ENCODE measurements at regions of chr1 and their contacts with region 1.

Region 1: DNA sequence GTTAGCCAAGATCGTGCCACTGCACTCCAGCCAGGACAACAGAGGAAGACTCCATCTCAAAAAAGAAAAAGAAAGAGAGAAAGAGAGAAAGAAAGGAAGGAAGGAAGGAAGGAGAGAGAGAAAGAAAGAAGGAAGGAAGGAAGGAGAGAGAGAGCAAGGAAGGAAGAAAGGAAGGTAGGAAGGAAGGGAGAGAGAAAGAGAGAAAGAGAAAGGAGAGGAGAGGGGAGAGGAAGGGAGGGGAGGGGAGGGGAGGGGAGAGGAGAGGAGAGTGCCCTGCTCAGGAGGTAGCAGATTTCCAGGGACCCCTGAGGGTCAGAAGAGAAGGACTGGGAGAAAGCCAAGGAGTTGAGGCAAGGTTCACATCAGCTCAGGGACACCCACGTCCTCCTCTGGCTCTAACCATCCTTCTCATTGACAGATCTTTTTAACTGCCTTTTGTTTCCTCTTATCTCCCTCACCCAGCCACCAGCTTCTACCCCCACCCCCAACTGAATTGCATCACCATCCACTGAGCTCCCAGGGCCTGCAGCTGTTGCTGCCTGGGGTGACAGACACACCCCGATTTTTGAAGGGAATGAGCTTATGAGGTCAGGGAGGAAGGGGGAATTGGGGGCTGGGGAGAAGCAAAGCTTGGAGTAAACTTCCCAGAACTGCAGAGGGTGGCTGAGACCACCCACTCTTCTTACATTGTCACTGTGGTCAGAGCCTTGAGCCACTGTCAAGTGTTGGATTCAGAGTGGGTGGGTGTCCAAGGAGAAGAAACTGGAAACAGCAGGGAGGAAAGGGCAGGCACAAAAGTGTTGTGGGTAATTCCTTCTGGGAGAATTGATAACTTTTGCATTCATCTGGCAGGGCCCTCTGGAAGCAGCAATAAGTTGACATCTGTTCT is 91.6 kb downstream of the GLUL start:
- DNase-seq: peak; percentile 52
- H3K4me3 ChIP-seq: no peak overlapping the region
- H3K27ac ChIP-seq: peak overlapping the region in 1 of 2 donors; percentile 3
- H3K4me1 ChIP-seq: peaks cover 50% of the 10 kb centered on the region
- H3K27me3 ChIP-seq: no peaks in the 10 kb centered on the region
- CTCF ChIP-seq: no peak
- POLR2A ChIP-seq: no peak

Region 2: GRCh38 chr1:182080955-182081582 is 218.9 kb before region 1 on chr1:
- intact Hi-C with region 1: no loop called
- DNase-seq: peak; percentile 61
- H3K4me3 ChIP-seq: no peak overlapping the region
- H3K27ac ChIP-seq: no peak overlapping the region
- H3K4me1 ChIP-seq: peaks cover 16% of the 10 kb centered on the region
- H3K27me3 ChIP-seq: no peaks in the 10 kb centered on the region
- CTCF ChIP-seq: peak; percentile 28 to 75 (median 68)
- POLR2A ChIP-seq: no peak

Region 3: DNA sequence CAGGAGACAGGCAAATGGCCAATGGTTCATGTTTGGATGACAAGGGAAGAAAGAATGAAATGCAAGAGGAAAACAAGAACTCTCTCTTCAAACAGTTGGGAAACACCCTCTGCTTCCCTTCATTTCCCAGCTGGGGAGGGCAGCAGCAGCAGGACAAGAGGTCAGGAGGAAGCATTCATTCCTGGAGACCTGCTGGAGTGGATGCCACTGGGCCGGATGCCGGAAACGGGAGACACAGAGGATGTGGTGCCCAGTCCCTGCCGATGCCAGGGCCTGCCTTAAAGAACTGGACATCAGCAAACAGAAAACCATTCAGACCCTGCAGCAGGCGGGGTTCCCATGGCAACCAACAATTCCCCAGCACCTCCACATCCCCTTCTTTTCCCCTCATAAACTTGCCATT is 136.2 kb before region 1 on chr1:
- intact Hi-C with region 1: no loop called
- DNase-seq: peak; percentile 49
- H3K4me3 ChIP-seq: no peak overlapping the region
- H3K27ac ChIP-seq: no peak overlapping the region
- H3K4me1 ChIP-seq: peaks cover 8% of the 10 kb centered on the region
- H3K27me3 ChIP-seq: no peaks in the 10 kb centered on the region
- CTCF ChIP-seq: no peak
- POLR2A ChIP-seq: no peak

Region 4: GRCh38 chr1:182206626-182207239 is 93.2 kb before region 1 on chr1:
- intact Hi-C with region 1: loop called (anchors 10 kb)
- DNase-seq: peak; percentile 85
- H3K4me3 ChIP-seq: no peak overlapping the region
- H3K27ac ChIP-seq: peak overlapping the region; percentile 82 to 88
- H3K4me1 ChIP-seq: peaks cover 23% of the 10 kb centered on the region
- H3K27me3 ChIP-seq: no peaks in the 10 kb centered on the region
- CTCF ChIP-seq: no peak
- POLR2A ChIP-seq: no peak

Region 5: DNA sequence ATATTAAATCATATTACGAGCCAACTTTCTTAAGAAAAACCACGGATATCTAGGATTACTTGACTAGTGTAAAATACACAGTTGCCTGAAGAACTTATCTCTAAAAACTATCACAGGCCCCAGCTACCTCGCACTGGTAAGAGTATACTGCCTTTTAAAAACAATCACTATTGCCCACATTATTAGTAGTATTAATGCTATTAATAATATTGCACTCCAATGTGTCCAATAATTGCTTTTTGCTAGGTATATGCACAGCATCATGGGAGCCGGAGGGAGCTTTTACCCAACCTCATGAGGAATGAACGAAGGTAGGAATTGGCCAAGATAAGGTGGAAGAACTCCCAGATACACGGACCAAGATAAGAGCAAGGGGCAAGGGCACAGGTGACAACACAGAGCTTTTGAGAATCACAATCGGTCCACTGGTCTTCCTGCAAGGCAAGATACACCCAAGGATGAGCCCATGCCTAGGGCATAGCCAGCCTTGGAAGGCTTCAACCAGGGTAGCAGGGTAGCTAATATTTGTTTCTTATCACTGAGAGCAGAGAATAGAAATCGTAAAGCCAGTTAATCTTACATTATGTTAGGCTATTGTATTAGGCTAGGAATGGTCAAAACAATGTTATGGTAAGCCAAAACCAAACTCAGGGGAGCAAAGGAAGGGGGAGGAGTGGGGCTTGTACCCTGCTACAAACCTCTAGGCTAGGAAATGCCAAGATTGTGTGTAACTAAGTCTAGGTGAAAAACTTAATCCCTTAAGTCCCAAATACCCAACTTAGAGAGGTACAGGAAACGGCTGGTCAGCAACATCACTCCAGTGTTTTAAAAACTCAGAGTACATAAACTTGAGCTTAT is 82.2 kb after region 1 on chr1:
- intact Hi-C with region 1: no loop called
- DNase-seq: no peak
- H3K4me3 ChIP-seq: no peak overlapping the region
- H3K27ac ChIP-seq: no peak overlapping the region
- H3K4me1 ChIP-seq: peaks cover 9% of the 10 kb centered on the region
- H3K27me3 ChIP-seq: no peaks in the 10 kb centered on the region
- CTCF ChIP-seq: no peak
- POLR2A ChIP-seq: no peak